CD4-positive, alpha-beta memory T cell (primary cell): ENCODE measurements at regions of chr6 and their contacts with region 1.

Region 1: DNA sequence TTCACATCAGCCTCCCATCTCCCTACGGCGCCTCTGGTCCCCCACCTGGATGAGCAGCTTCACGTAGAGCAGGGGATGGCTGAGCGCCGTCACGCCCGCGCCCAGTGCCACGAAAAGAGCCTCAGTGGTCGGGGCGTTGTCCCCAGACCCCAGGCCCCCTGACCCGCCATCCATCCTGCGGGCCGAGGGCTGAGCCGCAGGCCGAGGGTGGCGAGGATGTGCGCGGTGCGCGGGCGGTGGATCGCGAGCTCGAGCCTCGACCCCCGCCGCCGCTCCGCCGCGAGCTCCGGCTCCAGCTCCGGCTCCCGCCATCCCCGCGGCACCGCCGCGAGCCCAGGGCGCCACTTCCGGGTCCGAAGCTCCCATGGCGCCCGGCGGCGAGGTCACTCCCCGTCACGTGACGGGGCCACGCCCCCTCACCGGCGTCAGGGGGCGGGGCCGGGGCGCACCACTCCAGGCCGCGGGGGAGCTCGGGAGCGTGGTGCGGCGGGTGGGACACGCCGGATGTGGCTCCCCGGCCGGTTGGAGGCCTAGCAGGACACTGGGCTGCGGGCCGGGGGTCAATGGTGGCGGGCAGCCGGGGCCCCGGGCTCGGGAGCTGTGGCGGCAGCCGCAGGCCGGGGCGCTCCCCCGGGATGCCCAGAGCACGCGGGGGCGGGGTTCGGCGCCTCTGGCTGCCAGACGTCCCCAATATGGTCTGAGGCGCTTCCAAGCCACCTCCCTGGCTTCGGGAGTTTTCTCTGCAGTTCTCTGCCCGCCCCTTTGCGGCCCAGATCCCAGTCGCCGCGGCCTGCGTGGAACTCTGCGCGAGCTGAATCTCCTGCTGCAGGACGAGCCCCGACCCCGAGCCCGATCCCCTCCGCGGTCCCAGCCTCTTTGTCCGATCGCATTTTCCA is at the start of gene MTCH1:
- DNase-seq: peak; percentile 89 to 95 (median 90)
- H3K4me3 ChIP-seq: peak within 1 kb of the TSS; percentile 82 to 93
- H3K4me3 Mint-ChIP-seq: peak within 1 kb of the TSS; percentile 93 to 99 (median 96)
- H3K27ac ChIP-seq: peak within 1 kb of the TSS; percentile 94
- H3K27ac Mint-ChIP-seq: peak within 1 kb of the TSS in 6 of 7 donors; percentile 92 to 98 (median 98)
- H3K4me1 ChIP-seq: peaks cover 41% of the 10 kb centered on the region
- H3K4me1 Mint-ChIP-seq: peaks cover 14 to 30% (median 16%) of the 10 kb centered on the region in 4 donors
- H3K27me3 ChIP-seq: no peaks in the 10 kb centered on the region
- H3K27me3 Mint-ChIP-seq: peaks cover 0 to 2% of the 10 kb centered on the region in 2 donors
- total RNA-seq, gene MTCH1: 142 to 151 TPM

Region 2: DNA sequence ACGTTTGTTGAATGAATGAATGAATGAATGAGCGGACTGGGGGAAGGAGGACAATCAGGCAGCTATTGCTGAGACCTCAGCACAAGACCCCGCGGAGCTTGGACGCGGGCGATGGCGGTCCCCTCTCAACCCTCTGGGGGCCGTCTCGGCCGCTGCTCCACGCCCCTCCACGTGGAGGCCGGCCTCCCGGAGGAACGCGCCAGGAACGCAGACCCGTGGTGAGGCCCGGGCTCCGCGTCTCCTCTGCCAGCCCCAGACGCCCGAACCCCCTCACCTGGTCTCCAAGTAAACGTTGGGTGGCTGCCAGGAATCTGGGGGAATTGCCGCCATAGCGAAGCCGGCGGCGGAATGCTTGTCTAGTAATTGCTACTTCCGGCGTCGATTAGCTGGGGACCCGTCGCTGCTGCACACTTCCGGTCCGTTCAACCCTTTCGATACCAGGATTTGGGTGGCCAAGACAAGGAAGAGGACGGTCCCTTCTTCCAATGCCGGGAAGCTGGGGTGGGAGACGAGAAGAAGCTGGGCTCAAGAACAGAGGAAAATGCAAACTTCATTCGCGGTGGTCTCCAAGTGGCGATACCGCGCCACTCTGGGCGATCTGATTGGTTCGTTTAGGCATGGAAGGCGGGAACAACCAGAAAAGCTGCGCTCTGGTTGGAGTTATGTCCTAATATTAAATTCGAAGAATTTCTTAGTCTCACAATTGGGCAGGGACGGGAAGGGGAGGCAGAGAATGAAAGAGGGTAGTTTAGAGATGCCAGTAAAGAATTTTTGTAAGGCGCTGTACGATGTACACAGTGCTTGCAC is 111.4 kb before region 1 on chr6 and contains the start of gene PPIL1:
- CTCF ChIA-PET with region 1: no interaction called
- POLR2A ChIA-PET with region 1: interaction called, 29 read pairs
- intact Hi-C with region 1: no loop called
- DNase-seq: peak; percentile 91 to 94 (median 92)
- H3K4me3 ChIP-seq: peak within 1 kb of the TSS; percentile 95 to 96
- H3K4me3 Mint-ChIP-seq: peak within 1 kb of the TSS; percentile 95 to 100 (median 98)
- H3K27ac ChIP-seq: peak within 1 kb of the TSS; percentile 87
- H3K27ac Mint-ChIP-seq: peak within 1 kb of the TSS; percentile 91 to 100 (median 98)
- H3K4me1 ChIP-seq: peaks cover 23% of the 10 kb centered on the region
- H3K4me1 Mint-ChIP-seq: peaks cover 22 to 37% (median 31%) of the 10 kb centered on the region in 4 donors
- H3K27me3 ChIP-seq: no peaks in the 10 kb centered on the region
- H3K27me3 Mint-ChIP-seq: peaks cover 0 to 1% of the 10 kb centered on the region in 2 donors
- total RNA-seq, gene PPIL1: 8.4 to 9.2 TPM

Region 3: GRCh38 chr6:36947570-36948351 is 38.3 kb before region 1 on chr6:
- CTCF ChIA-PET with region 1: no interaction called
- POLR2A ChIA-PET with region 1: interaction called, 10 read pairs
- intact Hi-C with region 1: no loop called
- DNase-seq: peak; percentile 42 to 52 (median 49)
- H3K4me3 ChIP-seq: no peak overlapping the region
- H3K4me3 Mint-ChIP-seq: peak overlapping the region in 7 of 8 donors; percentile 43 to 71 (median 59)
- H3K27ac ChIP-seq: no peak overlapping the region
- H3K27ac Mint-ChIP-seq: peak overlapping the region in 6 of 7 donors; percentile 16 to 78 (median 57)
- H3K4me1 ChIP-seq: peaks cover 24% of the 10 kb centered on the region
- H3K4me1 Mint-ChIP-seq: peaks cover 11 to 38% (median 26%) of the 10 kb centered on the region in 4 donors
- H3K27me3 ChIP-seq: no peaks in the 10 kb centered on the region
- H3K27me3 Mint-ChIP-seq: peaks cover 0 to 2% of the 10 kb centered on the region in 2 donors

Region 4: GRCh38 chr6:36962874-36963273 is 23.2 kb before region 1 on chr6:
- CTCF ChIA-PET with region 1: no interaction called
- POLR2A ChIA-PET with region 1: interaction called, 33 read pairs
- intact Hi-C with region 1: loop called (anchors 1 kb)
- DNase-seq: peak; percentile 83 to 90 (median 85)
- H3K4me3 ChIP-seq: no peak overlapping the region
- H3K4me3 Mint-ChIP-seq: peak overlapping the region; percentile 49 to 87 (median 71)
- H3K27ac ChIP-seq: peak overlapping the region; percentile 55
- H3K27ac Mint-ChIP-seq: peak overlapping the region; percentile 90 to 98 (median 94)
- H3K4me1 ChIP-seq: peaks cover 55% of the 10 kb centered on the region
- H3K4me1 Mint-ChIP-seq: peaks cover 33 to 64% (median 50%) of the 10 kb centered on the region in 4 donors
- H3K27me3 ChIP-seq: no peaks in the 10 kb centered on the region
- H3K27me3 Mint-ChIP-seq: no peaks in the 10 kb centered on the region

Region 5: GRCh38 chr6:37051138-37052026 is 65.3 kb after region 1 on chr6:
- CTCF ChIA-PET with region 1: no interaction called
- POLR2A ChIA-PET with region 1: interaction called, 4 read pairs
- intact Hi-C with region 1: loop called (anchors 5 kb)
- DNase-seq: peak; percentile 84 to 91 (median 84)
- H3K4me3 ChIP-seq: no peak overlapping the region
- H3K4me3 Mint-ChIP-seq: peak overlapping the region; percentile 38 to 92 (median 68)
- H3K27ac ChIP-seq: peak overlapping the region; percentile 72
- H3K27ac Mint-ChIP-seq: peak overlapping the region; percentile 31 to 94 (median 92)
- H3K4me1 ChIP-seq: peaks cover 60% of the 10 kb centered on the region
- H3K4me1 Mint-ChIP-seq: peaks cover 50 to 62% (median 55%) of the 10 kb centered on the region in 4 donors
- H3K27me3 ChIP-seq: no peaks in the 10 kb centered on the region
- H3K27me3 Mint-ChIP-seq: no peaks in the 10 kb centered on the region